ENCODE measurements at regions of chr7 and their contacts with region 1.

Region 1: DNA sequence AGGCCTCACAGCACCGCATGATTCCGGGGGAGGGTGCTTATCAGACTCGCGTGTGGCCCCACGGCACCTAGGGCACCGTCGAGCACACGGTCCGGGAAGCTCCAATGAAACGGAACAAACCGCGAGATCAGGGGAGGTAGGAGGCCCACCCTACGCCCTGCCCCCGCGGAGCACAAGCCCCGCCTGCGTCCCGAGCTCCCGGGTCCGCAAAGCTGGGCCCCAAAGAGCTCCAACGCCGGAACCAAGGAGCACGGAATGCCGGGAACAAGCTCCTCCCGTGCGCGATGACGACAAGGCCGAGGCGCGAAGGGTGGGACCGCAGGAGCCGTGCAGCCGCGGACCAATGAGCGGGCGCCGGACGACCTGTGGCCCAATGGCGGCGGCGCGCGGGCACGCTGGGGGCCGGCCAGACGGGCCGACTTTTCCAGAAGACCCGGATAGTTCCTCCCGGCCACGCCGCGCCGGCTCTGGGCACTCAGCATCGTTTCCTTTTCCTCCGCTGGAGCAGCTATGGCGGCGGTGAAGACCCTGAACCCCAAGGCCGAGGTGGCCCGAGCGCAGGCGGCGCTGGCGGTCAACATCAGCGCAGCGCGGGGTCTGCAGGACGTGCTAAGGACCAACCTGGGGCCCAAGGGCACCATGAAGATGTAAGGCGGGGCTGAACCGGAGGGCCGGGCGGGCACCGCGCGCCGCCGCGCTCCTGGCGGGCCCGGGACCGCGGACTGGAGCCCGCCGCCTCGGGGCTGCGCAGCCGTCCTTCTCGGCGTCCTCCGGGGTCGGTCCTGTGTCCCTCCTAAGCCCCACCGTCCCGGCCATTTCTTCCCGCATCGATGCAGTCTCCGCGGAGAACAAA is at the starts of genes CCT6A and PSPH:
- DNase-seq: peak; percentile 94
- H3K4me3 Mint-ChIP-seq: peak within 1 kb of the TSS; percentile 95
- H3K27ac Mint-ChIP-seq: peak within 1 kb of the TSS; percentile 95
- H3K4me1 Mint-ChIP-seq: peaks cover 48% of the 10 kb centered on the region
- H3K27me3 Mint-ChIP-seq: no peaks in the 10 kb centered on the region
- total RNA-seq, gene CCT6A: 225 to 231 TPM
- total RNA-seq, gene PSPH: 15.7 to 18.6 TPM

Region 2: DNA sequence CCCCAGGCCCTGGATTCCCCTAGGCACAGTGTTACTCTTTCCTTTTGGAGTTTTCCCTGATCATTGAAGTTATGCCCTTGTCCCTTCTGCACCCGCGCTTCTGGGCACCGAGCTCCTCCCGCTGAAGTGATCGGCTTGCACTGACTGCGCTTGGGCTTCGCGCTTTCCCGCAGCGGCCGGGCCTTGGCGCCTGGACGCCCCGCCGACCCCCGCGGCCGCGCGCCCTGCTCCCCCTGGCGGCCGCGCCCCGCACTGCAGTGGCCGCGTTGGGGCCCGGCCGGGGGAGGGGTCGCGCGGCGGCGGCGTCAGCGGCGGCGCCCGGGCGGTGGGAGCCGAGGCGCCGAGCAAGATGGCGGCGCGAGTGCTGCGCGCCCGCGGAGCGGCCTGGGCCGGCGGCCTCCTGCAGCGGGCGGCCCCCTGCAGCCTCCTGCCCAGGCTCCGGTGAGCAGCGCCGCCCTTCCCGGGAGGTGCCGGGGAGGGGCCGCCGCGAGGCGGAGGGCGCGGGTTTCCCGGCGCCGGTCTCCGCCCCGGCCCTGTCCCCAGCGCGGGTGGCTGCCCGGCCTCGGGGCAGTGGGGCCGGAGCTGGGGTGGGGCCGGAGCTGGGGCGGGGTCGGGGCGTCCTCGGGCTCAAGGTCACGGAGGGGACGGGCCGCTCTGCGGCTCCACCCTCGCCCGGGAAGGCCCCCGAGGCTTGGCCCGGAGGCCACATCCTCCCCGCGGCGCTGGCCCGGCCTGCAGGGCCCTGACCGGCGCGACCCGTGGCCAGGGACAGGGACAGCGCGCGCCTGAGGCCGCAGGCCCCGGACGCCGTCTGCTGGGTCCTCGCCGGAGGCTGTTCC is 87.1 kb before region 1 on chr7 and contains the start of gene NIPSNAP2:
- CTCF ChIA-PET with region 1: no interaction called
- intact Hi-C with region 1: loop called (anchors 1 kb)
- DNase-seq: peak; percentile 46
- H3K4me3 Mint-ChIP-seq: peak within 1 kb of the TSS; percentile 77
- H3K27ac Mint-ChIP-seq: peak within 1 kb of the TSS; percentile 79
- H3K4me1 Mint-ChIP-seq: peaks cover 36% of the 10 kb centered on the region
- H3K27me3 Mint-ChIP-seq: no peaks in the 10 kb centered on the region
- total RNA-seq, gene NIPSNAP2: 57.3 to 57.6 TPM

Region 3: GRCh38 chr7:56033671-56034432 is 17.7 kb before region 1 on chr7:
- CTCF ChIA-PET with region 1: interaction called, 5 read pairs
- intact Hi-C with region 1: loop called (anchors 1 kb)
- DNase-seq: peak; percentile 54
- H3K4me3 Mint-ChIP-seq: peak overlapping the region; percentile 82
- H3K27ac Mint-ChIP-seq: peak overlapping the region; percentile 48
- H3K4me1 Mint-ChIP-seq: peaks cover 7% of the 10 kb centered on the region
- H3K27me3 Mint-ChIP-seq: no peaks in the 10 kb centered on the region

Region 4: DNA sequence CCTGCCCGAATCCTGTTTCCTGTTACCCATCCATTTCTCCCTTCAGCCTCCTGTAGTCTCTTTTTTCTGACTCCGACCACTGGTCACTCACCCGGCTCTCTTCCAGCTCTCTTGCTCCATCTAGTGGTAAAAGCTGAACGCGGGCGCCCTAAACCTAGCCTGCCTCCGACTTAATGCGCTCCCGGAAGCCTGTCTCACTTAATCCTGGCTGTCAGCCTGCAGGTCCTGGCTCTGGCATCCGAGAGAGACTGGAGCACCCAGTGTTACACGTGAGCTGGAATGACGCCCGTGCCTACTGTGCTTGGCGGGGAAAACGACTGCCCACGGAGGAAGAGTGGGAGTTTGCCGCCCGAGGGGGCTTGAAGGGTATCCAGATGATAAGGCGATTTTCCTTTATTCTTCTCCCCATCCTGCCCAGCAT is 22.8 kb after region 1 on chr7:
- CTCF ChIA-PET with region 1: interaction called, 15 read pairs
- intact Hi-C with region 1: no loop called
- DNase-seq: peak; percentile 72
- H3K4me3 Mint-ChIP-seq: no peak overlapping the region
- H3K27ac Mint-ChIP-seq: peak overlapping the region; percentile 3
- H3K4me1 Mint-ChIP-seq: peaks cover 6% of the 10 kb centered on the region
- H3K27me3 Mint-ChIP-seq: no peaks in the 10 kb centered on the region

Region 5: GRCh38 chr7:56199639-56200038 is 148.1 kb after region 1 on chr7:
- CTCF ChIA-PET with region 1: no interaction called
- intact Hi-C with region 1: no loop called
- DNase-seq: no peak
- H3K4me3 Mint-ChIP-seq: no peak overlapping the region
- H3K27ac Mint-ChIP-seq: no peak overlapping the region
- H3K4me1 Mint-ChIP-seq: no peaks in the 10 kb centered on the region
- H3K27me3 Mint-ChIP-seq: no peaks in the 10 kb centered on the region

Measured in activated naive CD4-positive, alpha-beta T cell treated with anti-CD3 and anti-CD28 coated beads for 36 hours (primary cell).